Posterior cingulate gyrus (tissue), 11 donors: ENCODE measurements at regions of chrX and their contacts with region 1.

Region 1: DNA sequence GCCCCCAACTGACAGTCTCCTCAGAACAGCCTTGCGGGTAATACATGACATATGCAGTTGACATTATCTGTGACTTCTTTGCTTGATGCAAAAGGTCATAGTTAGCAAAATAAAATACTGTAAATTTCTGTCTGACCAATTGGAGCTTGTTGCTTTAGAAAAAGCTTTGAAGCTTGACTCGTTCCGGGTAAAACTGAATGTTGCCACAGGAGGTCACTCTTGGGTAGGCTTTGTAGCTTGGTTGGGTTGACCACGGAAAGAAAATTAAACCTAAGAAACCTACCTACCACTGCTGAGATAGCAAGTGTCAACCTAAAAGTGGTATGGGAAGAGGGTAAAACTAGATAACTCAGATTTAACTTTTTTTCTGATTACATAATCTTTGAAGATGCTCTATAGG is 23.2 kb downstream of the PRPS2 start:
- DNase-seq: peak in 3 of 10 donors; percentile 25 to 36 (median 35)

Region 2: GRCh38 chrX:12894074-12895030 is 79.9 kb after region 1 on chrX:
- intact Hi-C with region 1: loop called (anchors 5 kb)
- DNase-seq: peak in 7 of 10 donors; percentile 12 to 86 (median 29)

Region 3: DNA sequence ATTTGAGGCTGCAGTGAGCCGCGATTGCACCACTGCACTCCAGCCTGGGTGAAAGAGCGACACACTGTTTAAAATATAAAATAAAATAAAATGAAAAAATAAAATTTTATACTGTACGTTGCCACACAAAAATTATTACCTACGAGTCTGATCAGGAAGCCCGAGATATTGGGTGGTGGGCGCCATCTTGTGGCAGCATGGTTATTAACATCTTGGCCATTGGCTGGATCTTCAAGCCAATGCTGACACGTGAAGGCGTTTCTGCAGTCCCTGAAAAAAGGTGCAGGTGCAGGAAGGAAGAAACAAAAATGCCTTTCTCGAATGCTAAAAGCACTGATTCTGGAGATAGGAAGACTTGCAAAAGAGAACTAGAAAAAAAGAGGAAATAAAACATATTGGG is 87.1 kb after region 1 on chrX:
- intact Hi-C with region 1: loop called (anchors 1 kb)
- DNase-seq: peak in 9 of 10 donors; percentile 11 to 90 (median 54)